HCT116 (cell line): ENCODE measurements at regions of chr17 and their contacts with region 1.

Region 1: GRCh38 chr17:16537130-16537458 is 31.9 kb downstream of the ZNF287 start:
- DNase-seq: no peak
- ATAC-seq: no peak
- H3K4me3 ChIP-seq: no peak overlapping the region
- H3K27ac ChIP-seq: no peak overlapping the region
- H3K4me1 ChIP-seq: peaks cover 0 to 5% of the 10 kb centered on the region in 2 experiments; a peak in 1 of 4 replicates
- H3K27me3 ChIP-seq: no peaks in the 10 kb centered on the region
- CTCF ChIP-seq: no peak; a peak in 1 of 6 replicates
- POLR2A ChIP-seq: no peak
- RAD21 ChIP-seq: no peak; the same call in 1 of the 2 replicates

Region 2: GRCh38 chr17:16623282-16623681 is 86.2 kb after region 1 on chr17:
- CTCF ChIA-PET with region 1: no interaction called
- POLR2A ChIA-PET with region 1: no interaction called
- RAD21 ChIA-PET with region 1: no interaction called
- intact Hi-C with region 1: loop called (anchors 10 kb)
- DNase-seq: no peak
- ATAC-seq: no peak
- H3K4me3 ChIP-seq: no peak overlapping the region
- H3K27ac ChIP-seq: no peak overlapping the region
- H3K4me1 ChIP-seq: no peaks in the 10 kb centered on the region
- H3K27me3 ChIP-seq: no peaks in the 10 kb centered on the region
- CTCF ChIP-seq: no peak
- POLR2A ChIP-seq: no peak
- RAD21 ChIP-seq: no peak